ENCODE measurements at regions of chr16 and their contacts with region 1.

Region 1: DNA sequence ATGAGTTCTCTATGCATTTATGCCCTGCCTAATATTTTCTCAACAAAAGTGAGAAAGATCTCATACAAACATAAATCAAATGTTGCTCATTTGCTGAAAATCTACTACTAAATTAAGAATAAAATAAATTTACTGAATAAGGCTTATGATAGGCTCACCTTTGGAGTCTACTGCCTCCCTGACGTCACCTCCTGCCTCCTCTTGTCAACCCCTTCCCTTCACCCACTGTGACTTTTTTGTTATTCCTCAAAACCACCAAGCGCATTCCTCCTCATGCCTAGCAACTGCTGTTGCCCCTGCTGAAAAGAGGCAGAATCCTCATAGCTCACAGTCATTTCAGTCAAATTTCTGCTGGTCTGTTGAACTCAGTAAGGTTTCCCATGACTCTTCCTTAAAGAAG is 2422.2 kb downstream of the TP53TG3F start:
- DNase-seq: no peak
- ATAC-seq: no peak
- H3K4me3 Mint-ChIP-seq: no peak overlapping the region
- H3K27ac Mint-ChIP-seq: no peak overlapping the region
- H3K4me1 Mint-ChIP-seq: no peaks in the 10 kb centered on the region
- H3K27me3 Mint-ChIP-seq: no peaks in the 10 kb centered on the region

Region 2: GRCh38 chr16:35449663-35450062 is 432.0 kb before region 1 on chr16:
- CTCF ChIA-PET with region 1: no interaction called
- POLR2A ChIA-PET with region 1: no interaction called
- intact Hi-C with region 1: no loop called
- DNase-seq: no peak
- ATAC-seq: no peak
- H3K4me3 Mint-ChIP-seq: no peak overlapping the region
- H3K27ac Mint-ChIP-seq: no peak overlapping the region
- H3K4me1 Mint-ChIP-seq: no peaks in the 10 kb centered on the region
- H3K27me3 Mint-ChIP-seq: no peaks in the 10 kb centered on the region

Region 3: GRCh38 chr16:35574454-35575431 is 306.9 kb before region 1 on chr16:
- CTCF ChIA-PET with region 1: no interaction called
- POLR2A ChIA-PET with region 1: no interaction called
- intact Hi-C with region 1: loop called in 1 of 2 experiments (anchors 10 kb)
- DNase-seq: no peak
- ATAC-seq: no peak
- H3K4me3 Mint-ChIP-seq: no peak overlapping the region
- H3K27ac Mint-ChIP-seq: no peak overlapping the region
- H3K4me1 Mint-ChIP-seq: no peaks in the 10 kb centered on the region
- H3K27me3 Mint-ChIP-seq: no peaks in the 10 kb centered on the region

Measured in activated CD4-positive, alpha-beta T cell treated with anti-CD3 and anti-CD28 coated beads for 36 hours (primary cell).